Heart left ventricle (tissue), 16 donors: ENCODE measurements at regions of chr5 and their contacts with region 1.

Region 1: GRCh38 chr5:88883059-88883835 is at the start of gene MEF2C:
- DNase-seq: peak; percentile 78 to 89 (median 86)
- ATAC-seq: peak; percentile 73 to 93 (median 85)
- H3K4me3 ChIP-seq: peak within 1 kb of the TSS; percentile 47 to 75 (median 71)
- H3K27ac ChIP-seq: peak within 1 kb of the TSS; percentile 77 to 93 (median 92)
- H3K4me1 ChIP-seq: peaks cover 0 to 53% (median 34%) of the 10 kb centered on the region in 12 donors
- H3K27me3 ChIP-seq: no peaks in the 10 kb centered on the region
- CTCF ChIP-seq: no peak
- POLR2A ChIP-seq: peak in 1 of 2 donors; percentile 87
- total RNA-seq, gene MEF2C: 36.8 to 98.5 (median 58.6) TPM

Region 2: GRCh38 chr5:88826646-88827585 is 56.3 kb before region 1 on chr5:
- intact Hi-C with region 1: loop called in 9 of 10 experiments (anchors 2 to 10 kb)
- DNase-seq: peak in 4 of 5 donors; percentile 48 to 78 (median 58)
- ATAC-seq: peak; percentile 80 to 94 (median 88)
- H3K4me3 ChIP-seq: peak overlapping the region in 9 of 12 donors; percentile 4 to 34 (median 19)
- H3K27ac ChIP-seq: peak overlapping the region; percentile 62 to 88 (median 82)
- H3K4me1 ChIP-seq: peaks cover 9 to 92% (median 73%) of the 10 kb centered on the region in 12 donors
- H3K27me3 ChIP-seq: no peaks in the 10 kb centered on the region
- CTCF ChIP-seq: no peak
- POLR2A ChIP-seq: peak in 1 of 2 donors; percentile 57

Region 3: GRCh38 chr5:89081360-89081759 is 198.1 kb after region 1 on chr5:
- intact Hi-C with region 1: loop called in 1 of 10 experiments (anchors 10 kb)
- DNase-seq: no peak
- ATAC-seq: no peak
- H3K4me3 ChIP-seq: no peak overlapping the region
- H3K27ac ChIP-seq: no peak overlapping the region
- H3K4me1 ChIP-seq: no peaks in the 10 kb centered on the region
- H3K27me3 ChIP-seq: no peaks in the 10 kb centered on the region
- CTCF ChIP-seq: no peak
- POLR2A ChIP-seq: no peak

Region 4: DNA sequence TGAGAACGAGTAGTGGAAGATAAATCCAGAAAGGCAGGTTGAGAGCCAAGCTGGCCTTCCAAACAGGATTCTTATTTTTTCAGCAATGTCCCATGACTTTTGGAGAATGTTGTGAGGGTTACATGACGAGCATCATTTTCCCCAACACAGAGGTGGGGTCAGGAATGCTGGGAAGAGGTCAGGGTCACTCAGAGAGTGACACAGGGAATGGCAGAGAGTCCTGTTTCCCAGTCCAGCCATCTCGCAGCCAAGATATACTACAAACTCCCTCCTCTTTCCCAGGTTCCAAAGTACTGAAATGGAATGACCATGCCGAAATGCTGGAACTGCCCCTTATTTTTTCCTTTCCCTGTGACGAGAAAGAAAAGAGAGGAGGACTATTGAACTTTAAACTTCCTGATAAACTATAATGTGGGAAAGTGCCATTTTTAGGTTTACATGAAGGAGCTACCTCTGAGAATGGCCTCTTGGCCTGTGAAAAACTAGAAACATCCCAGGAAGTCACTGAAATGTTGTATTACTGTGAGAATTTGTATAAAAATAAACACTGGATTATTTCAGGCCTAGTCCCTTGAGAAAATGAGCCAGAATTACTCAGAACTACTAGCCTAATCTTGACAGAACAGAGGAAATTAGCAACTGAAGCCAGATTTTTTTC is 1105.9 kb after region 1 on chr5:
- intact Hi-C with region 1: loop called in 2 of 10 experiments (anchors 10 kb)
- DNase-seq: peak in 4 of 5 donors; percentile 46 to 73 (median 55)
- ATAC-seq: peak; percentile 74 to 91 (median 89)
- H3K4me3 ChIP-seq: peak overlapping the region in 1 of 12 donors; percentile 1
- H3K27ac ChIP-seq: peak overlapping the region; percentile 41 to 85 (median 68)
- H3K4me1 ChIP-seq: peaks cover 0 to 34% (median 17%) of the 10 kb centered on the region in 12 donors
- H3K27me3 ChIP-seq: no peaks in the 10 kb centered on the region
- CTCF ChIP-seq: no peak
- POLR2A ChIP-seq: no peak

Region 5: DNA sequence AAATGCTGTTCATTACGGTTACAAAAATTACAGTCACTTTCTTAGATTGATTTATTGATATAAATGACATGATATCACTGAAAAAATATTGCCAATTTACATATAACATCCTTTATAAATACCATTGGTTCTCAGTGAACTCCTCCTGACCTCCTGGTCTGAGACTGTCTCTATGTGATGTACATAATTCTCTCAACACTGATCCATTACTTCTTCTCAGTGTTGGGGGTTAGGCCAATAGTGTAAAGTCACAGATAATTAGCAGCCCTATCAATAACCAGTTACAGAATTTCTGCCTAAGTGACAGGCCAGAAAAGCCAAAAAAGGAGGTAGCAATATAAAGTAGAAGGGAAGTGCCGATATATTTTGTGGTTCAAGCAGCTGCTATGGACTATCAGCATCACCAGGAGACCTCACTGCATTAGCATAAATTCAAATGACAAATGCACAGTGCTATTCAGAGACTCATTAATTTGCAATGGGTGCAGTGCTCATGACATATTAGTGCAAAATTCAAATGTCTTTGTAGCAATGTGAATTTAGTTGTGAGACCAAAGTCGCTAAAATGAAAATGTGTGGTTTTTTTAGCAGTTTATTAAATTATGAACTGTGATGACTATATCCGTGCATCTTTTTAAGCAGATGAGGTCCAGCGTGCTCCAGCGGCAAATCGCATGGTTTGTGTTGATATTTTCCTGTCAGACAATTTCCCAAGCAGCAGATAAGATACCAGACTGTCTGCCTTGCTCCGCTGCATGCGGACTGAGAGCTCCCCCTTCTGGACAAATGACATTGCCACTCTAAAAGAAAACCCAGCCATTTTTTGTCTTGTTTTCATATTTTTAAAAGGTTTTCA is 1381.7 kb after region 1 on chr5:
- intact Hi-C with region 1: loop called in 3 of 10 experiments (anchors 5 to 10 kb)
- DNase-seq: peak; percentile 51 to 66 (median 59)
- ATAC-seq: peak in 3 of 4 donors; percentile 67 to 69 (median 68)
- H3K4me3 ChIP-seq: no peak overlapping the region
- H3K27ac ChIP-seq: peak overlapping the region in 1 of 12 donors; percentile 7
- H3K4me1 ChIP-seq: peaks cover 0 to 5% (median 0%) of the 10 kb centered on the region in 12 donors
- H3K27me3 ChIP-seq: no peaks in the 10 kb centered on the region
- CTCF ChIP-seq: peak; percentile 85 to 97 (median 92)
- POLR2A ChIP-seq: no peak